ENCODE measurements at regions of chr1 and their contacts with region 1.

Region 1: GRCh38 chr1:210407207-210407886 is 78.6 kb downstream of the HHAT start:
- DNase-seq: peak; percentile 87
- ATAC-seq: peak; percentile 70
- H3K4me3 Mint-ChIP-seq: no peak overlapping the region
- H3K27ac Mint-ChIP-seq: no peak overlapping the region
- H3K4me1 Mint-ChIP-seq: peaks cover 2% of the 10 kb centered on the region
- H3K27me3 Mint-ChIP-seq: no peaks in the 10 kb centered on the region
- CTCF ChIP-seq: peak; percentile 91

Region 2: DNA sequence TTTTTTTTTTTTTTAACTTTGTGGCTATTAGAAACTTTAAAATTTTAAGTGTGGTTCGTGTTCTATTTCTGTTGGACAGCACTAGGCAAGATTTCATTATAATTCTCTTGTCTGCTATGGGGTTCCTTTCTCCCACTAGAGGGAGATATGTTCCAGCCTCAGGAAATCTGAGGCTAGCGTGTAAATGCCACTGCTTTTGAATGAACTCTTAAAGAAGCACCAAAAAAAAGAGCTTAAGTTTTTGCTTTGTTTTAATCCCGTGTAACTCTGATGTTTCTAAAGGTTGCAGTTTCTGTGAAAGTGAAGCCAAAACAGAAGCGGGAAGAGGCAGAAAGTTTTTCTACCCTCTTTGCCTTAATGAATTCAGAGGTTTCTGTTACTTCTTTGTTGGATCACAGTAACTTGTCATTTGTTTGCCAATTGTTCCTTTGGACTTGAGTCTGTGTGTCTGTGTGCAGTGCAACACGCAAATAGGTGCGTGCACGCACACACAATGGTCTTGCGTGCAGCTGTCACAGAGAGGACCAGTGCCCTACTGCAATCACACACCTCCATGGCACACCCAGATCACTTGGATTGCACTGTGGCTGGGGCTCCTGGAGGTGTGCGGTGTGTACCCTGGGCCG is 46.4 kb before region 1 on chr1:
- CTCF ChIA-PET with region 1: interaction called, 21 read pairs
- POLR2A ChIA-PET with region 1: no interaction called
- intact Hi-C with region 1: no loop called
- DNase-seq: no peak
- ATAC-seq: peak; percentile 73
- H3K4me3 Mint-ChIP-seq: no peak overlapping the region
- H3K27ac Mint-ChIP-seq: no peak overlapping the region
- H3K4me1 Mint-ChIP-seq: peaks cover 4% of the 10 kb centered on the region
- H3K27me3 Mint-ChIP-seq: no peaks in the 10 kb centered on the region
- CTCF ChIP-seq: peak; percentile 51

Region 3: DNA sequence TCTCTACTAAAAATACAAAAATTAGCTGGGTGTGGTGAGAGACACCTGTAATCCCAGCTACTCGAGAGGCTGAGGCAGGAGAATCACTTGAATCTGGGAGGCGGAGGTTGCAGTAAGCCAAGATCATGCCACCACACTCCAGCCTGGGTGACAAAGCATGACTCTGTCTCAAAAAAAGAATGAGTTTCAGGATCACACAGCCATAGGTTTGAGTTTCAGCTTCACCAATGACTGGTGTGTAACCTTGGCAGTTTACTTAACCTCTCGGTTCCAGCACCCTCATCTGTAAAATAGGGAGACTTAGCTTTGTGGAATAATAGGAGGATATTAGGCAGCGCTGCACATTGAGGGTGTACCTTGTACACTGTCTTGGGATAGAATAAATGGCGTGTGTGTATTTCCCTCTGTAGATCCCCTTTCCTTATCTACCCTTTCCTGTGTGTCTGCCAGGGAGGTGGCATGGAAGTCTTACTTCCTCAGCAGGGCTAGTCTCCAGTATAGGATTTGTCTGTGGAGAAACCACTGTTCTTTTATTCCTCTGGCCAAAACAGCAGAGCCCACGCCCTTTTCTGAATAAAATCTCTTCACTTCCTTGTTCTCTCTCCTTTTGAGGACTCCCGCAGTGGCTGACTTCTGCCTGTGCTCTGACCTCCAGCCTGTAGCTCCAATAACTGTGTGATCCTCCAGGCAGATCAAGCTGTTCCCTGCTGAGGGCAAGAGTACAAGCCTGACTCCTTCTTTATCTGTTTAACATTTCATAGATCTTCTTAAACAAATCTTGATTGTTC is 11.7 kb after region 1 on chr1:
- CTCF ChIA-PET with region 1: interaction called, 11 read pairs
- POLR2A ChIA-PET with region 1: no interaction called
- intact Hi-C with region 1: no loop called
- DNase-seq: no peak
- ATAC-seq: no peak
- H3K4me3 Mint-ChIP-seq: no peak overlapping the region
- H3K27ac Mint-ChIP-seq: no peak overlapping the region
- H3K4me1 Mint-ChIP-seq: no peaks in the 10 kb centered on the region
- H3K27me3 Mint-ChIP-seq: no peaks in the 10 kb centered on the region
- CTCF ChIP-seq: no peak

Region 4: GRCh38 chr1:210448297-210448892 is 41.0 kb after region 1 on chr1:
- CTCF ChIA-PET with region 1: interaction called, 37 read pairs
- POLR2A ChIA-PET with region 1: interaction called, 5 read pairs
- intact Hi-C with region 1: no loop called
- DNase-seq: peak; percentile 49
- ATAC-seq: no peak
- H3K4me3 Mint-ChIP-seq: no peak overlapping the region
- H3K27ac Mint-ChIP-seq: no peak overlapping the region
- H3K4me1 Mint-ChIP-seq: peaks cover 22% of the 10 kb centered on the region
- H3K27me3 Mint-ChIP-seq: no peaks in the 10 kb centered on the region
- CTCF ChIP-seq: peak; percentile 73

Region 5: GRCh38 chr1:210584439-210585113 is 177.2 kb after region 1 on chr1:
- CTCF ChIA-PET with region 1: interaction called, 3 read pairs
- POLR2A ChIA-PET with region 1: no interaction called
- intact Hi-C with region 1: loop called (anchors 5 kb)
- DNase-seq: peak; percentile 91
- ATAC-seq: peak; percentile 88
- H3K4me3 Mint-ChIP-seq: no peak overlapping the region
- H3K27ac Mint-ChIP-seq: no peak overlapping the region
- H3K4me1 Mint-ChIP-seq: peaks cover 11% of the 10 kb centered on the region
- H3K27me3 Mint-ChIP-seq: no peaks in the 10 kb centered on the region
- CTCF ChIP-seq: peak; percentile 67